Heart right ventricle (tissue), 16 donors: ENCODE measurements at regions of chr9 and their contacts with region 1.

Region 1: GRCh38 chr9:14314929-14315645 is 1.1 kb upstream of the NFIB start:
- DNase-seq: peak; percentile 94 to 98
- ATAC-seq: peak; percentile 66 to 91 (median 82)
- H3K4me3 ChIP-seq: peak overlapping the region; percentile 55 to 94 (median 76)
- H3K27ac ChIP-seq: peak overlapping the region; percentile 96 to 100 (median 99)
- H3K4me1 ChIP-seq: peaks cover 0 to 55% (median 41%) of the 10 kb centered on the region in 9 donors
- H3K27me3 ChIP-seq: peaks cover 0 to 69% (median 0%) of the 10 kb centered on the region in 7 donors
- CTCF ChIP-seq: no peak

Region 2: GRCh38 chr9:13898957-13899356 is 416.1 kb before region 1 on chr9:
- intact Hi-C with region 1: loop called in 3 of 10 experiments (anchors 2 to 10 kb)
- DNase-seq: peak in 1 of 2 donors; percentile 26
- ATAC-seq: no peak
- H3K4me3 ChIP-seq: no peak overlapping the region
- H3K27ac ChIP-seq: peak overlapping the region in 9 of 10 donors; percentile 37 to 86 (median 70)
- H3K4me1 ChIP-seq: peaks cover 0 to 64% (median 41%) of the 10 kb centered on the region in 9 donors
- H3K27me3 ChIP-seq: no peaks in the 10 kb centered on the region
- CTCF ChIP-seq: no peak

Region 3: DNA sequence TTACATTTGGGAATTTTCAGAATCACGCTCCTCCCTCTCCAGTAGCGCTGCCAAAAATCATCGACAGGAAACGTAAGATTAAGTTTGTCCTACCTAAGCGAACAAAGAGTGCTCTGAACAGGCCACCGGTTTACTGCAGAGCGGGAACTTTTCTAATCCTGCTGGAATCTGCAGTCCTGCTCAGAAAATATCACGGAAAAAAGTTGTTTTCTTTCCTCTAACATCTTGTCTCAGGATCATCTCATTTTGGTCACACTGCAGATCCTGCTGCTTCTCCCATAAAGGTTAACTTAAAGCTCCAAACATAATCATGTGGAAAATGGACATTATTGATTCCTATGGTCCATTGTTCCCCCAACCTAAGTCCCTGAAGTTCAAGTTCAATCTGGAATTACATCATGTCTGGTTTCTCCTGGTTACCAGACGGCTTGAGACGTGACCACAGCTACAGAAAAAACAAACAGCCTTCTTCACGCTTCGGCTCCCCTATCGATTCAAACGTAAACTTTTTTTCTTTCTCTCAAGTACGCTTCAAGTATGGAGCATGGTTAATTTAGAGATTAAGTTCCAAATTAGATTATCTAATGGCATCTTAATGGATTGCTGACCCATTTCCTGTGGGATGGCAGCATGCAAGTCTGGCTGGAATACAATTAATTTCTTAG is 218.7 kb before region 1 on chr9:
- intact Hi-C with region 1: loop called in 6 of 10 experiments (anchors 2 to 10 kb)
- DNase-seq: peak in 1 of 2 donors; percentile 63
- ATAC-seq: peak; percentile 56 to 93 (median 82)
- H3K4me3 ChIP-seq: peak overlapping the region in 8 of 10 donors; percentile 3 to 43 (median 29)
- H3K27ac ChIP-seq: peak overlapping the region; percentile 50 to 93 (median 81)
- H3K4me1 ChIP-seq: peaks cover 3 to 85% (median 55%) of the 10 kb centered on the region in 9 donors
- H3K27me3 ChIP-seq: no peaks in the 10 kb centered on the region
- CTCF ChIP-seq: no peak

Region 4: DNA sequence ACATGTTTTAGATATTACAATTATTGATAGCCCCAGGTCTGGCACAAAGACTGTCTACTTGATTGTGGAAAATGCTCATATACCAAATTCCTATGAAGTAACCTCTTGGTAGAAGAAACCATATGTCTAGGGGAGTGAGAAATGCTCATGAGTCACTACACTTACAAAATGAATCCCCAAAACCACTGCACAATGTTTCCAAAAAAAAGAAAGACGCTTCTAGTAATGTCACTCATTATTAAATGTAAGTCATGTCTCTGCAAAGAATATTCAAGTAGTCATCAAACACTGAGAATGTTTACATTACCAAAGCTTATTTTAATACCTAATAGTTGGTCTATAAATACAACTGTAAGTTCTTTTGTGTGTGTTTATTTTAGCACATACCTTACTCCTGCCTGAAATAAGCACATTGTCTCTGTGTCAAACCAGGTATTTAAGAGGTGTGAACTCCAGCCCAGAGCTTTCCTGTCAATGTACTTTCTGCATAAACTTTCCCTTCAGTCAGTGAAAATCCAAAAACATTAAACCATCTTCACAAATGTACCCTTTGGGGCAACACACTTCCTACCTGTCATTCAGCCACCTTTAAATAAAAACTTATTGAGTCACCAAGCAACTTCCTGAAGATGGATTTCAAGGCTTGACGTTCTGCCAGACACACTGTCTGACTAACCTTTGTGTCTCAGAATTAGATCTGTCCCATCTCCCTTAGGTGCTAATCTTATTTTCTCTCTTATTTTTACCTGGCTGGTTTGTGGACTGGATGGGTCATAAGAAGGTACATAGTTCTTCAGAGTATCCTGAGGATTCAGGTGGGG is 195.2 kb before region 1 on chr9:
- intact Hi-C with region 1: loop called in 1 of 10 experiments (anchors 10 kb)
- DNase-seq: no peak
- ATAC-seq: no peak
- H3K4me3 ChIP-seq: no peak overlapping the region
- H3K27ac ChIP-seq: peak overlapping the region in 1 of 10 donors; percentile 32
- H3K4me1 ChIP-seq: peaks cover 0 to 5% (median 0%) of the 10 kb centered on the region in 9 donors
- H3K27me3 ChIP-seq: no peaks in the 10 kb centered on the region
- CTCF ChIP-seq: no peak

Region 5: GRCh38 chr9:14198841-14199455 is 116.1 kb before region 1 on chr9:
- intact Hi-C with region 1: loop called in 3 of 10 experiments (anchors 2 to 10 kb)
- DNase-seq: peak; percentile 63 to 75
- ATAC-seq: peak; percentile 72 to 91 (median 87)
- H3K4me3 ChIP-seq: peak overlapping the region in 4 of 10 donors; percentile 4 to 8 (median 7)
- H3K27ac ChIP-seq: peak overlapping the region; percentile 10 to 85 (median 71)
- H3K4me1 ChIP-seq: peaks cover 8 to 100% (median 82%) of the 10 kb centered on the region in 9 donors
- H3K27me3 ChIP-seq: no peaks in the 10 kb centered on the region
- CTCF ChIP-seq: no peak

Region 6: DNA sequence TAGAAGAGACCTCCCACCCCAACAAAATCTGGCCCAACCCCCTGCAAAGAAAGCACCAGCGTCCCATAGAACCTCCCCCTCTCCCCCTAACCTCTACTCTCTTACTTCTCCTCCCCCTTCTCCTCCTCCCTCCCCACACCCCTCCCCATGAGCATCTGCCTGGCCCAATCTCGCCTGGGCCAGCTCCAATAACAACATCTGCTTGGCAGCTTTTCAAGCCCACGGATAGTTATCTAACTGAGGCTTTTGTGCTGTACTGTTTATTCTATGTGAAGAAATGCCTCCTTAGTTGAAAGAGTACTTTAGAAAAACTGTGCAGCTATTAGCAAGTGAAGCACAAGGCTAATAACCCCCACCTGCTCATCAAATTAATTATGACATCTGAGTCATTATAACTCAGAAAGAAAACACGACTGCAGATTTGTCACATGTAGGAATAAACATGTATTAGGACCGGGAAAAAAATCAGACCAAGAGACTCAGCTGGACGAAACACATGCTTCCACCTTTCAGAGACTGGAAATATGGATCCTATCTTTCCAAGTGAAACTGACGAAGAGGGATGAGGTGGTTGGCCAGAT is 43.9 kb before region 1 on chr9:
- intact Hi-C with region 1: loop called in 3 of 10 experiments (anchors 5 kb)
- DNase-seq: peak; percentile 71 to 87
- ATAC-seq: peak; percentile 62 to 84 (median 70)
- H3K4me3 ChIP-seq: peak overlapping the region in 3 of 10 donors; percentile 4 to 9 (median 8)
- H3K27ac ChIP-seq: peak overlapping the region in 8 of 10 donors; percentile 0 to 84 (median 34)
- H3K4me1 ChIP-seq: peaks cover 22 to 77% (median 69%) of the 10 kb centered on the region in 9 donors
- H3K27me3 ChIP-seq: no peaks in the 10 kb centered on the region
- CTCF ChIP-seq: no peak

Region 7: GRCh38 chr9:14347406-14348122 is 32.5 kb after region 1 on chr9:
- intact Hi-C with region 1: loop called in 7 of 10 experiments (anchors 1 to 5 kb)
- DNase-seq: peak; percentile 66 to 67
- ATAC-seq: peak; percentile 48 to 63 (median 55)
- H3K4me3 ChIP-seq: peak overlapping the region; percentile 42 to 83 (median 57)
- H3K27ac ChIP-seq: peak overlapping the region; percentile 80 to 98 (median 92)
- H3K4me1 ChIP-seq: peaks cover 6 to 84% (median 49%) of the 10 kb centered on the region in 9 donors
- H3K27me3 ChIP-seq: peaks cover 0 to 70% (median 0%) of the 10 kb centered on the region in 7 donors
- CTCF ChIP-seq: peak in 5 of 9 donors; percentile 10 to 56 (median 41)

Region 8: DNA sequence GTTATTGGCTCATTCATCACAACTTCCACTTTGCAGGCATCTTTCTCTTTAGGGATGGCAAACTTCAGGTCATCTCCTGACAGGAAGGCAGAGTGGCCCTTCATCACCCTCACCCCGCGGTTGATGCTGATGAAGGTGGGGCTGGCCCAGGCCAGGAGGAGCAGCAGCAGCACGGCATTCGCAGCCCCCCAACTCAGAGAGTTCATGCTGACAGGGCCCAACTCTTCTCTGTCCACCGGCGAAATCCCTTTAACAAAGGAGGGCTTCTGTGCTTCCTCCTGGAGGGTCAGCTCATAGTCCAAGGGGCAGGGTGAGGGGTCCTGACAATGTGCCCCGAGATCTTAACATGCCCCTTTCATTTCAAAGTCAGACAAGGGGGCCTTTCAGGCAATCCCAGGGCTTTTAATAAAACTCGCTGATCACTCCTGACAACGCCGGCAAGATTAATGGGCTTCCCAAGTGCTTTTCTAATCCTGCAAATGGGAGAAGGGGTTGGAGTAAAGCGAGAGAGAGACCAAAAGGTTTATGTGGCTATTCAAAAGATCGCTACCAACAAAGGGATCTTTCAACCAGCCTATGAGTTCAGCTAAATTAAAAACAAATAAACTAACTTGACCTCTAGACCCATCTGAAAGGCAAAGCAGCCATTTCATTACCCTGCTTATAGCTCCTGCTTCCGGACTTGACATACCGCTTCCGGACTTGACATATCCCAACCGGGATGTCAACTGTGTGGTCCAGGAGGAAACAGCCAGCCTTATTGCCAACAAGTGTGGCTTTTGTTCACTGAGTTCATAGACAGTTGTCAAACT is 553.9 kb after region 1 on chr9:
- intact Hi-C with region 1: no loop called
- DNase-seq: no peak
- ATAC-seq: no peak
- H3K4me3 ChIP-seq: no peak overlapping the region
- H3K27ac ChIP-seq: no peak overlapping the region
- H3K4me1 ChIP-seq: no peaks in the 10 kb centered on the region
- H3K27me3 ChIP-seq: no peaks in the 10 kb centered on the region
- CTCF ChIP-seq: no peak